ENCODE measurements at regions of chr2 and their contacts with region 1.

Region 1: DNA sequence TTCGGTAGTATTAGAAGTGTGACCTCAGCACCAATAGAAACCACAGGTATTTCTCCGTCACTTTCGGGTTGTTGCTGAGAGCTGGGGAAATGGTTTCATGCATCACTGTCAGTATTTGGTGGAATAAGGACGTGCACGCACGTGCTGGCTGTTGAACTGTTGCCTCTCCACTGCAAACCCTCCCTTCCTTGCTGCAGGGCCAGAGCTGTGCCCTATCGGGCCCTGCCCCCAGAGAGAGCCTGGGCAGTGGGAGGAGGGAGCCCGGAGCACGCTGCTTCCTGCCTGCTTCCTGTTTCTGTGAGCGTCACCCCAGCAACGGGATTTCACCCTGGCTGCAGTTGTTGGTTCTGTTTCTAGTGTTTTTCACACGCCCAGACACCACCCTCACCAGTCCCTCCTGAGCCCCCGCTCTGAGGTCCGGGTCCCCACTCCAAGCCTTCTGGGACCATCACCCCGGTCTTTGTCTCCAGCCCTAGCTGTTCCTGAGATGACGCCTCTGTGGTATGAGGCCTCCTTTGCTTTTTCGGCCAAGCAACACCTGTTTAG is 47.4 kb downstream of the LRRFIP1 start:
- DNase-seq: peak in 1 of 2 donors; percentile 78
- ATAC-seq: peak; percentile 30 to 41
- H3K4me3 ChIP-seq: peak overlapping the region; percentile 34 to 44 (median 39)
- H3K27ac ChIP-seq: peak overlapping the region; percentile 76 to 85 (median 84)
- H3K4me1 ChIP-seq: peaks cover 81 to 83% of the 10 kb centered on the region in 2 donors
- H3K27me3 ChIP-seq: no peaks in the 10 kb centered on the region
- CTCF ChIP-seq: peak in 3 of 5 experiments; percentile 17 to 35 (median 34)
- POLR2A ChIP-seq: peak in 1 of 2 donors; percentile 13

Region 2: DNA sequence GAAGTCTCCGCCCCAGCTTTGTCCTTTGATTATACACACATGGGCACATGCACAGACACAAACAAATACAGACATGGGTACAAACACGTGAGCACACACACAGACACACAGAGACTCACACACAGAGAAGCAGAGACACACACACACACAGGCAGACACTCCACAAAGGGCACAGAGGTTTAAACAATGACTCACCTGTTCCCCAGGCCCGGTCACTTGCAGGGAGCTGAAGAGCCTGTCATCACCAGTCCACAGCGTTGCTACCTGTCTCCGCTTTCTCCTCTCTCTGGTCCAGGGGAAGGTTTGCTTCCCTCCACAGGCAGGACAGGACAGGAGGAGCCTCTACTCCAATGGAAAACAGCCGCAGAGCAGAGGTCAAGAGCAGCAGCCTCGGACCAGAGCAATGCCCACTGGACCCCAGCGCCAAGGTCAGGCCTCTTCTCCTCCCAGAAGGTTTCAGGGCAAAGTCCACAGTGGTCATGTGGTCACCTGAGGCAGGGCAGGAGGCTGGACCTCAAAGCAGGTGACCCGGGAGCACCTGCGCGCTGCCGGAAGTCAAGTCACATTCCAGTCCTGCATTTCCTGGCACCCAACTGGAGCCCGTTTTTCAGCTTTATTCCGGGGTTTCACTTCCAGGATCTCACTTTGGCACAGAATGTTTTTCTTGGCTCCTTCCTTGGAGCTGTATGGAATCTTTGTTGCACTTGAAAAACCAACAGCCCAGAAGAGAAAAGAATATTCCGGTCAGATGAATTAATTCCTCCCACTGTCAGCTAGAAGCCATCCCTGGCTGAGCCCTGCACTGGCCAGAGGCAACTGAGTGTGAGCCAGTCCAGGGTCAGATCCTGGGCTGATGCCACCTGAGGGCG is 84.3 kb before region 1 on chr2 and contains the start of gene RAB17:
- in situ Hi-C with region 1: loop called in 1 of 4 experiments (anchors 5 kb)
- intact Hi-C with region 1: no loop called
- DNase-seq: peak in 1 of 2 donors; percentile 46
- ATAC-seq: peak; percentile 31 to 77
- H3K4me3 ChIP-seq: no peak within 1 kb of the TSS
- H3K27ac ChIP-seq: no peak within 1 kb of the TSS
- H3K4me1 ChIP-seq: peaks cover 14 to 15% of the 10 kb centered on the region in 2 donors
- H3K27me3 ChIP-seq: no peaks in the 10 kb centered on the region
- CTCF ChIP-seq: no peak
- POLR2A ChIP-seq: no peak
- total RNA-seq, gene RAB17: 0.42 to 1.3 TPM in 2 of 4 donors, not detected in the others

Measured in gastrocnemius medialis (tissue), 4 donors.